ENCODE measurements at regions of chr13 and their contacts with region 1.

Region 1: DNA sequence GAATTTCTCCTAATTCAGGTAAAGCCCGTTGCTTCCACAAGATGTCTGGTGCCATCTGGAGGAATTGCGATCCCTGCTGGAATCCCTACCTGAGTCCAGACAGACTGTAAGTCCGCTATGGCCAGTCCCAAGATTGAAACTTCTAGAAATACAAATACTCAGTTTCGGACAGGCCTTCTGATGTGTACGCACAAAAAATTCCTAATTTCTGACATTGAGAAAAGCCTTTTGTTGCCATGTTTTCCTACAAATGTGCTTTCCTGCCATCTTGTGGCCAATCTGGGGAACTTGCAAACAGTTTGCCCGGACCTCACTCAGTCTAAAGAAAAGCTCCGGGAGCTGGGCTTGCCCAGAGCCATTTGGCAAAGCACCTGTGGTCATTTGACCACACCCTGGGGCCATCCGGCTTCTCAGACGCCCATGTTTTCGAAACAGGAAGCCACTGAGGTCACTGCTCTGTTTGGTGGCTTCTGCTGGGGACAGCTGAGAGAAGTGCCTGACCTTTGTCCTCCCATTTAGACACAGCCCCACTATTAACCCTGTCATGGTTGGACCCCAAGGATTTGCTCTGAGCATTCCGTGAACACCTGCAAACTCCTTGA is 79.4 kb downstream of the SLC15A1 start:
- DNase-seq: peak; percentile 66
- ATAC-seq: peak; percentile 69
- H3K4me3 Mint-ChIP-seq: no peak overlapping the region
- H3K27ac Mint-ChIP-seq: no peak overlapping the region
- H3K4me1 Mint-ChIP-seq: no peaks in the 10 kb centered on the region
- H3K27me3 Mint-ChIP-seq: peaks cover 5% of the 10 kb centered on the region

Region 2: DNA sequence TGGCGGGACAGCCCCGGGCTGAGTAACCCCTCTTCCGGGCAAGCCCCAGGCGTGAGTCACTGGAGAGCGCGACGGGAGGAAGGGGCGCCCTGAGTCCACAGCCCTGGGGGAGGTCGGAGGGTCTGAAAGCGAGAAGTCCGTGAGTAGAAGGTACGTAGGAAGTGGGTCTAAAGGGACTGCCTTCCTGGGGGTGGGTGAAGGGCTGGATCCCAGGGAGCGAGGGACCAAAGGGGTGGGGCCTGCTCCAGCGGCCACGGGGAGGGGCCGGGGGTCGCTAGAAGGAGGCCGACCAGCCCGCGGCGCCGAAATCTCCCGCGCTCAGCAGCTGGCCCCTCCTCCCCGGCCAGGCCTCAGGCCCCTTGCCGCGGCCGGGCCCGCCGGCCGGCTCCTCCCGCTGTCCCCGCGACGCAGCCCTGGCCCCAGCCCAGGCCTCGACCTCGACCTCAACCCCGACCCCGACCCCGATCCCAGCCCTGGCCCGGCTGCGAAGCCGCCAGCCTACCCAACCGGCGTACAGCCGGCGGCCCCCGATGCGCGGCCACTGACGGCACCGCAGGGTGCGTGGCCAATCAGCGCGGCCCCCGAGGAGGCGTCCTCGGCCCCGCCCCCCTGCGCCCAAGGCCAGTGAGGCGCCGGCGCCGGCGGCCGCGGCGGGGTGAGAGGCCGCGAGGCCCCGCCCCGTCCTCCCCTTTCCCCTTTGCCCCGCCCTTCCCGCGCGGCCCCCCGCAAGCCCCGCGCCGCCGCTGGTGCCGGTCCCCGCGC is 697.0 kb before region 1 on chr13:
- CTCF ChIA-PET with region 1: no interaction called
- POLR2A ChIA-PET with region 1: no interaction called
- intact Hi-C with region 1: loop called in 1 of 2 experiments (anchors 5 kb)
- DNase-seq: peak; percentile 94
- ATAC-seq: peak; percentile 92
- H3K4me3 Mint-ChIP-seq: peak overlapping the region; percentile 99
- H3K27ac Mint-ChIP-seq: peak overlapping the region; percentile 96
- H3K4me1 Mint-ChIP-seq: peaks cover 31% of the 10 kb centered on the region
- H3K27me3 Mint-ChIP-seq: no peaks in the 10 kb centered on the region

Region 3: GRCh38 chr13:98033277-98034247 is 639.5 kb before region 1 on chr13:
- CTCF ChIA-PET with region 1: no interaction called
- POLR2A ChIA-PET with region 1: no interaction called
- intact Hi-C with region 1: loop called (anchors 5 to 10 kb)
- DNase-seq: no peak
- ATAC-seq: no peak
- H3K4me3 Mint-ChIP-seq: no peak overlapping the region
- H3K27ac Mint-ChIP-seq: no peak overlapping the region
- H3K4me1 Mint-ChIP-seq: no peaks in the 10 kb centered on the region
- H3K27me3 Mint-ChIP-seq: peaks cover 2% of the 10 kb centered on the region

Region 4: GRCh38 chr13:98445340-98446233 is 227.5 kb before region 1 on chr13:
- CTCF ChIA-PET with region 1: interaction called, 48 read pairs
- POLR2A ChIA-PET with region 1: no interaction called
- intact Hi-C with region 1: loop called (anchors 1 kb)
- DNase-seq: peak; percentile 89
- ATAC-seq: peak; percentile 95
- H3K4me3 Mint-ChIP-seq: no peak overlapping the region
- H3K27ac Mint-ChIP-seq: peak overlapping the region; percentile 88
- H3K4me1 Mint-ChIP-seq: peaks cover 15% of the 10 kb centered on the region
- H3K27me3 Mint-ChIP-seq: no peaks in the 10 kb centered on the region

Region 5: GRCh38 chr13:98535501-98536354 is 137.3 kb before region 1 on chr13:
- CTCF ChIA-PET with region 1: no interaction called
- POLR2A ChIA-PET with region 1: no interaction called
- intact Hi-C with region 1: no loop called
- DNase-seq: no peak
- ATAC-seq: no peak
- H3K4me3 Mint-ChIP-seq: no peak overlapping the region
- H3K27ac Mint-ChIP-seq: peak overlapping the region; percentile 23
- H3K4me1 Mint-ChIP-seq: peaks cover 93% of the 10 kb centered on the region
- H3K27me3 Mint-ChIP-seq: no peaks in the 10 kb centered on the region

Region 6: GRCh38 chr13:98782654-98783053 is 109.6 kb after region 1 on chr13:
- CTCF ChIA-PET with region 1: no interaction called
- POLR2A ChIA-PET with region 1: no interaction called
- intact Hi-C with region 1: no loop called
- DNase-seq: no peak
- ATAC-seq: no peak
- H3K4me3 Mint-ChIP-seq: no peak overlapping the region
- H3K27ac Mint-ChIP-seq: no peak overlapping the region
- H3K4me1 Mint-ChIP-seq: no peaks in the 10 kb centered on the region
- H3K27me3 Mint-ChIP-seq: peaks cover 22% of the 10 kb centered on the region

Region 7: GRCh38 chr13:98842864-98843481 is 169.9 kb after region 1 on chr13:
- CTCF ChIA-PET with region 1: no interaction called
- POLR2A ChIA-PET with region 1: no interaction called
- intact Hi-C with region 1: loop called (anchors 5 kb)
- DNase-seq: peak; percentile 86
- ATAC-seq: peak; percentile 88
- H3K4me3 Mint-ChIP-seq: no peak overlapping the region
- H3K27ac Mint-ChIP-seq: no peak overlapping the region
- H3K4me1 Mint-ChIP-seq: no peaks in the 10 kb centered on the region
- H3K27me3 Mint-ChIP-seq: no peaks in the 10 kb centered on the region

Region 8: DNA sequence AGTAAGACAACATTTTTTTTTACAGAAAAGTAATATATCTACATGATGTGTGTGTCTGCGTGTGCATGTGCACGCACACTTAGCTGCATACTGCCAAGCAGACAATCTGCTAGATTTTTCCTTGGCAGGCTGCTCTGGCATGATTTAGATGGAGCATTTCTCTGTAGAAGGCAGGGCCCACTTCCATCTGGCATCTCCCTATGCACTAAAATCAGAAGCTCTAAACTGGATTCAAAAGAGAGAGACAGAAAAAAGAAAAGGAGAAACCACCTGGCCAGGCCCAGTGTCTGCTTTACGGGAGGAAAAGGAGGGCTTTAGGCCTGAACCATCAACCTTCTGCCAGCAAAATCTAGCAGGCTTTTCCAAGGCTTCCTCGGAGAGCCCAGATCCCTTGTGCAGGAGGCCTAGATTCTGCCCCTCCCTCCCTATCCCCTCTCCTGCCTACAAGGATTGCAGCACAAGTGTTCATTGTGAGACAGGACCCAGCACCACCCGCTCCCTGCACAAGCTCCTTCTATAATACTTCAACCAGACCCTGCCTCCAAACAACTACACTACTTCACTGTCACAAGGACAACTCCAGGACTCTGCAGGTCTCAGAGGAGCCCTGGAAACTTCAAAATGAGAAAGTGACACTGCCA is 205.6 kb after region 1 on chr13:
- CTCF ChIA-PET with region 1: no interaction called
- POLR2A ChIA-PET with region 1: no interaction called
- intact Hi-C with region 1: no loop called
- DNase-seq: no peak
- ATAC-seq: no peak
- H3K4me3 Mint-ChIP-seq: no peak overlapping the region
- H3K27ac Mint-ChIP-seq: no peak overlapping the region
- H3K4me1 Mint-ChIP-seq: peaks cover 23% of the 10 kb centered on the region
- H3K27me3 Mint-ChIP-seq: no peaks in the 10 kb centered on the region

Measured in activated CD4-positive, alpha-beta T cell treated with anti-CD3 and anti-CD28 coated beads for 36 hours (primary cell).